Head of caudate nucleus (tissue), 42 donors: ENCODE measurements at regions of chr10 and their contacts with region 1.

Region 1: DNA sequence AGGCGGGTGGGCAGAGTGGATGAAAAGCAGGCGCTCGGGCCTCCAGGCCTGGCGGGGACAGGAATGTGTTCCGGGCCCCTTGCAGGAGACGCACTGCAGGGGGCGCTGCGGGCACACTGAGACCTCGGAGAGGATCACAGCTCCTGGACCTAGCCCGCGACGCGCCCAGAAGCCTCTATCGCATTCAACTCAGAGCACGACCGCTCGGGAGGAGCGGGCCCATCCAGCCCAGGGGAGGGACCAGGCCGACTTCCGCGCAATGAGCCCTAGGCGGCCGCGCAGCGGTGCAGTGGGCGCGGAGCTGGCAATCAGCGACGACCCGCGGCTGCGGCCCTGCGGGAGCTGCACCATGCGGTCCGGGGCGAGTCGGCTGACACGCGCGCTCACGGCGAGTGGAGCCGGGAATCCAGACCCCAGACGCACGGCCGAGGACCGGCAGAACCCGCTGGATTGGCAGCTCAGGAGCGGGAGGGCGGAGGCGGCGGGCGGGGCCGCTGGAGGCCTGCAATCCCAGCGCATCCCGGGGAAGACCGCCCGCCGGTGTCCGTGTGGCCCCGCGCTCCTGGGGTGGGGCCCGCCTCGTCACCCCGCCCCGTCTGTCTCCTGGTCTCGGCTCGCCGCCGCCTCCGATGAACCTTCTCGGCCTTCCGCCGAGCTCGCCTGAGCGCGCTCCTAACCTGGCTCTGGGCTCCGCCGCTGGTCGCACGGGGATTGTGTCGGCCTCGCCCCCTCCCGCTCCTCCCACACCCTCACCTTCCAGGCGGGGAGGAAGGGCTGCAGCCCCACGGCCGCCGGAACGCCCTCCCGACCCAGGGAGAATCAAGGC is 33.5 kb upstream of the GRID1 start:
- DNase-seq: peak; percentile 91 to 99 (median 97)

Region 2: GRCh38 chr10:86486856-86487255 is 86.8 kb after region 1 on chr10:
- intact Hi-C with region 1: loop called (anchors 5 kb)
- DNase-seq: peak in 1 of 42 donors; percentile 13

Region 3: GRCh38 chr10:86553639-86554038 is 153.5 kb after region 1 on chr10:
- intact Hi-C with region 1: no loop called
- DNase-seq: no peak

Region 4: DNA sequence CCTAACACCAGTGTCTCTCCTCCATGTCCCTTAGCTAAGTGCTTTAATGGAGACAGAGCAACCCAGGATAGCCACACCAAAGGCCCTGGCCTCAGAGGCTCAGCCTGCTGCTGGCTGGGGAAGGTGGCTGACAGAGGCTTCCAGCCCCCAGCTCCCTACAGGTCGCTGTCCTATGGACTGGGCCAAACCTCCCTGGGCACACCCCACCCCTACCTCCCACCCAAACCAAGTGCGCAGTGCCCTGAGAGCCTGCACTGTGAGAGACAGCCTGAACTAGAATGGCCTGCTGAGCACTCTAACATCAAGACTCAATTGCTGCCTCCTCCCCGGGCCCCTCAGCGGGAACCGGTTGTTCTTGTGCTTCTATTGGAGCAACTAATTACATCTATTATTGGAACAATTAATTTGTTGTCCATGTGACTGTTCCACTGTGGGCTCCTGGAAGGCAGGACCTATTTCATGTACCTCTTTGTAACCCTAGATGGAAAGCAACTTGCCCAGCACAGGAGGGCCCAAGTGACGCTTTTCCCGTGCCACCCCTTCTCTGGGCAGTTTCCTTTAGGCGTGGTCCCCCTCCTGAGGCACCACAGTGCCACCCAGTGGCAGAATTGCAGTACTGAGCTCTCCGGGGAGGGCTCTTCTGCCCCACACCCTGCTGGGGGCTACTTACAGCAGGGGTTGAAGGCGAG is 185.1 kb after region 1 on chr10:
- intact Hi-C with region 1: loop called (anchors 2 kb)
- DNase-seq: peak; percentile 55 to 91 (median 77)

Region 5: GRCh38 chr10:86688398-86688921 is 288.4 kb after region 1 on chr10:
- intact Hi-C with region 1: loop called (anchors 10 kb)
- DNase-seq: peak; percentile 43 to 89 (median 72)

Region 6: GRCh38 chr10:86899670-86900276 is 499.7 kb after region 1 on chr10:
- intact Hi-C with region 1: loop called (anchors 10 kb)
- DNase-seq: peak in 41 of 42 donors; percentile 35 to 89 (median 73)